ENCODE measurements at regions of chr11 and their contacts with region 1.

Region 1: GRCh38 chr11:32052218-32052617 is 38.7 kb upstream of the RCN1 start:
- DNase-seq: no peak
- ATAC-seq: peak; percentile 50 to 69
- H3K4me3 ChIP-seq: no peak overlapping the region
- H3K27ac ChIP-seq: no peak overlapping the region
- H3K4me1 ChIP-seq: peaks cover 4% of the 10 kb centered on the region
- H3K27me3 ChIP-seq: no peaks in the 10 kb centered on the region
- CTCF ChIP-seq: peak; percentile 80

Region 2: GRCh38 chr11:32131301-32131700 is 79.1 kb after region 1 on chr11:
- intact Hi-C with region 1: no loop called
- DNase-seq: no peak
- ATAC-seq: no peak
- H3K4me3 ChIP-seq: no peak overlapping the region
- H3K27ac ChIP-seq: no peak overlapping the region
- H3K4me1 ChIP-seq: no peaks in the 10 kb centered on the region
- H3K27me3 ChIP-seq: no peaks in the 10 kb centered on the region
- CTCF ChIP-seq: no peak

Region 3: DNA sequence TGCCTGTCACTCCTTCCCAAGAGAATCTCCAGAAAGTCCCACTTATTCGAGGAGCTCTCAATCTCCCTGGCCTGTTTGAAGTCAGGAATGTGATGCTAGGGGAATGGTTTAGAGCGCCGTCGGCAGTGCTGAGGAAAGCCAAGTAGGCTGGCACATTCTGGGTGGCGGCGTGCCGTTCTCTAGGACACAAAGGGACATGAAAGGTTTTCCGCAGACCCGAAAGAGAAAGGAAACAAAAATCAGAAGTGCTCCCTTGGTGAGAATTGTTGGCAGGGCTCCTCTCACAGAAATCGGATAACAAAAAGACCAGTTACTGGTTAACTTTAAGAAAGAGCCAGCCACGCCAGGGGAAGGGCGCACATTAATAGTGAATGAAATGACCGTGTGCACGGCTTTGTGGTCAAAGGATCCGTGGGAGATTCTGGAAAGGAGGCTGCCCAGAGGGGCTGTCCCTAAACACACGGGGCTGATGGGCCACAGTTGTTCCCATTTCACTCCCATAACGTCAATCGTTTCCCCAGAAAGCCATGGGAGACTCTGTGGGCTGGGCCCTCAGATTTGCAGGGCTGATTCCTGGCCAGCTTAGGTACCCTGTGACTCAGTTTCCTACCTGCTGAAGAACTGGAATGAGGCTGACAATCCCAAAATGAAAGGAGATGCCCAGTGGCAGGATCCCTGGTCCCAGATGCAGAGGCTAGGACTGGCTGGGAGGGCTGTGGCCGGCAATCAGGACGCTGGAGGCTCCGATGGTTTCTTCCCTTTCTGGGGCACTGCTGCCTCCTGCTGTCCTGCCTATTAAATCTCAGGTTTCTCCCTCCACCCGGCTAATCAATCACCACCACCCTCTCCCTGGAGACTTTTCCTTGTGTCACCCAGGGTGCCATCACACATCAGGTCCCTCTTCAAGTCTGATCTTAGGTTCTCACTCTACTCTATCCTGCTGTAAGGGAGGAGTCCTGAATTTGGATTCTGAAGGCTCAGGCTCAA is 120.9 kb after region 1 on chr11:
- intact Hi-C with region 1: loop called (anchors 5 kb)
- DNase-seq: peak; percentile 52
- ATAC-seq: peak; percentile 67 to 79
- H3K4me3 ChIP-seq: peak overlapping the region; percentile 46
- H3K27ac ChIP-seq: peak overlapping the region; percentile 25
- H3K4me1 ChIP-seq: peaks cover 15% of the 10 kb centered on the region
- H3K27me3 ChIP-seq: no peaks in the 10 kb centered on the region
- CTCF ChIP-seq: peak; percentile 60

Region 4: GRCh38 chr11:32312865-32313403 is 260.7 kb after region 1 on chr11:
- intact Hi-C with region 1: no loop called
- DNase-seq: no peak
- ATAC-seq: peak; percentile 73 to 77
- H3K4me3 ChIP-seq: no peak overlapping the region
- H3K27ac ChIP-seq: no peak overlapping the region
- H3K4me1 ChIP-seq: peaks cover 5% of the 10 kb centered on the region
- H3K27me3 ChIP-seq: no peaks in the 10 kb centered on the region
- CTCF ChIP-seq: peak; percentile 59